ENCODE measurements at regions of chr19 and their contacts with region 1.

Region 1: DNA sequence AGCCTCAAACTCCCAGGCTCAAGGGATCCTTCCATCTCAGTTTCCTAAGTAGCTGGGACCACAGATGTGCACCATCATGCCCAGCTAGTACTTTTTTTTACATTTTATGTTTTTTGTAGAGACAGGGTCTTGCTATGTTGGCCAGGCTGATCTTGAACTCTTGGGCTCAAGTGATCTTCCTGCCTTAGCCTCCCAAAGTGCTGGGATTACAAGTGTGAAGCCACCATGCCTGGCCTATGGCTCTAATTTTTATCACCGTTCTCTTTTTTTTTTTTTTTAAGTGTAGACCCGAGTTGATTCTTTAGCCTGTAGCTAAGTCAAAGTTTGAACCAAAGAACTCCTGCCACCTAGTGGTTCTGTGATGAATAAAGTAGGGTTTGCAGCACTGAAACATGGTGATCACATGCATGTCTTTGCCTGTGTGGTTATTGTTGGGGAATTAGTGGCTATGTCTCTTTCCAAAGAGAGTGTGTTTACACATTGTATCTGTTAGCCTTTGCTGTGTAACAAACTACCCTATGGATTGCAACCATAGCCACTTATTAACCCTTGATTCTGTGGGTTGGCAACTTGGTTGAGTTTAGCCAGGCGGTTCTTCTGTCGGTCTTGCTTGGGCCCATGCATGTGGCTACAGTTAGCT is 11.6 kb downstream of the NFILZ start:
- DNase-seq: no peak
- H3K4me3 ChIP-seq: no peak overlapping the region
- H3K27ac ChIP-seq: no peak overlapping the region
- H3K27me3 ChIP-seq: no peaks in the 10 kb centered on the region
- CTCF ChIP-seq: peak; percentile 64

Region 2: GRCh38 chr19:8592231-8593009 is 49.6 kb before region 1 on chr19:
- CTCF ChIA-PET with region 1: interaction called, 15 read pairs
- POLR2A ChIA-PET with region 1: no interaction called
- DNase-seq: peak; percentile 90
- H3K4me3 ChIP-seq: peak overlapping the region; percentile 53
- H3K27ac ChIP-seq: no peak overlapping the region
- H3K27me3 ChIP-seq: peaks cover 11% of the 10 kb centered on the region
- CTCF ChIP-seq: no peak

Region 3: DNA sequence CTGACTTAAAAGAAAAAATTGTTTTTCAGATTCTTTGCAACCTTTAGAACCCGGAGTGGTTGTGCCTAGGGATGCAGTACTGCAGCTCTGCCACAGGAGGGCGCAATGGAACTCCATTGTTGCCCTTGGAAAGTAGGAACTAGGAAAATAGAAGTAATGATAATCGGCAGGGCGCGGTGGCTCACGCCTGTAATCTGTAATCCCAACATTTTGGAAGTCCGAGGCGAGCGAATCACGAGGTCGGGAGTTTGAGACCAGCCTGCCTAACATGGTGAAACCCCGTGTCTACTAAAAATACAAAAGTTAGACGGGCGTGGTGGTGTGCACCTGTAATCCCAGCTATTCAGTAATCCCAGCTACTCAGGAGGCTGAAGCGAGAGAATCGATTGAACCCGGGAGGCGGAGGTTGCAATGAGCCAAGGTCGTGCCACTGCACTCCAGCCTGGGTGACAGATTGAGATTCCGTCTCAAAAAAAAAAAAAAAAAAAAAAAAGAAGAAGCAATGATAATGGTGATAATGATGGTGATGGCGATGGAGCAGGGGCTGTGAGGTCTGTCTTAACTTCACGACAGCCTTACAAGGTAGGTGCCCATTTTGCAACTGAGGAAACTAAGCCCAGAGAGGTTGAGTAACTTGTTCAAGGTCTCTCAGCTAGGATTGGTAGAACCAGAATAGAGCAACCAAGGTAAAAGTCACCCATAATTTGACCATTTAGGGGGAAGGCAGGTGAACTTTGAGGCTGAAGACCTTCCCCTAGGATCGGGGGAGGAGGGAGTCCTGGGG is 26.0 kb before region 1 on chr19:
- CTCF ChIA-PET with region 1: interaction called, 23 read pairs
- POLR2A ChIA-PET with region 1: interaction called, 4 read pairs
- DNase-seq: no peak
- H3K4me3 ChIP-seq: no peak overlapping the region
- H3K27ac ChIP-seq: no peak overlapping the region
- H3K27me3 ChIP-seq: no peaks in the 10 kb centered on the region
- CTCF ChIP-seq: peak; percentile 93

Region 4: DNA sequence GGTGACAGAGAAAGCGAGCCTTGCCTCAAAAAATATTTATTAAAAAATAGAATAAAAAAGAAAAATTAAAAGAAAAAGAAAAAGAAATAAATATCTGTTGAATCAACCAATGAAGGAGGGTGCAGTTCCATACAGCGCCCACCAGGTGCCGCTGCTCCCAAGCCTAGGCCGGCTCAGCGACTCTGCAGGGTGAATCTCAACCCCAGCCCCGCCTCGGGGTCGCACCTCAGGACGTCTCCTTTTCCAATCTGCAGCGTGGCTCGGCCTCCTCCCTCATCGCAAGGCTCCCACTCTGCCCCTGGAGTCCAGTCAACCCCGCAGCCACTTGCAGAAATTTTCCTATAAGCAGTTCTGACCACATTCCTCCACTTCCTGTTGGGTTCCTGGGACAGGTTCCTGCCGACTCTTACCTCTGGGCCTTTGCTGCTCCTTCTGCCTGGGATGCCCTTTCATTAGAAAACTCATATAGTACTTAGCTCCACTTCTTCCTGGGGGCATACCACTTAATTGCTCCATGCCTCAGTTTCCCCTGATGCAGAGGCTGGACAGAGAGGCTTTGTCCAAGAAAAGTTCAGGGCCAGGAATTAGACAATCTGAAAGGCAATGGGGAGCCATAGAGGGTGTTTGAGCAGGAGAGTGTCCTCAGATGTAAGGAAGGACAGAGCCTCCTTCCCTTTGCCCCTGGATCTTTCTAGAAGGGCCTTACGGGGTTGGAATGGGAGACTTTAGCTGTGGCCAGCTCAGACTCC is 12.7 kb after region 1 on chr19:
- CTCF ChIA-PET with region 1: interaction called, 26 read pairs
- POLR2A ChIA-PET with region 1: no interaction called
- DNase-seq: no peak
- H3K4me3 ChIP-seq: no peak overlapping the region; the same call in 1 of the 2 replicates
- H3K27ac ChIP-seq: no peak overlapping the region
- H3K27me3 ChIP-seq: no peaks in the 10 kb centered on the region
- CTCF ChIP-seq: peak; percentile 94